A549 (cell line): ENCODE measurements at regions of chr14 and their contacts with region 1.

Region 1: GRCh38 chr14:77862154-77862786 is 62.4 kb downstream of the ADCK1 start:
- DNase-seq: peak; percentile 66 to 79
- ATAC-seq: peak; percentile 68 to 94; a peak in 5 of 6 replicates
- H3K4me3 ChIP-seq: no peak overlapping the region
- H3K27ac ChIP-seq: no peak overlapping the region
- H3K4me1 ChIP-seq: no peaks in the 10 kb centered on the region
- CTCF ChIP-seq: peak; percentile 82
- EP300 ChIP-seq: no peak
- POLR2A ChIP-seq: no peak
- RAD21 ChIP-seq: peak; percentile 82 to 83

Region 2: GRCh38 chr14:77822304-77822703 is 40.0 kb before region 1 on chr14:
- CTCF ChIA-PET with region 1: no interaction called
- POLR2A ChIA-PET with region 1: no interaction called
- DNase-seq: no peak
- ATAC-seq: peak; percentile 30 to 39; a peak in 1 of 6 replicates
- H3K4me3 ChIP-seq: no peak overlapping the region
- H3K27ac ChIP-seq: no peak overlapping the region
- H3K4me1 ChIP-seq: no peaks in the 10 kb centered on the region
- CTCF ChIP-seq: no peak
- EP300 ChIP-seq: no peak
- POLR2A ChIP-seq: no peak
- RAD21 ChIP-seq: no peak

Region 3: GRCh38 chr14:77849711-77850110 is 12.6 kb before region 1 on chr14:
- CTCF ChIA-PET with region 1: interaction called, 19 read pairs
- POLR2A ChIA-PET with region 1: no interaction called
- DNase-seq: no peak
- ATAC-seq: no peak
- H3K4me3 ChIP-seq: no peak overlapping the region
- H3K27ac ChIP-seq: no peak overlapping the region
- H3K4me1 ChIP-seq: no peaks in the 10 kb centered on the region
- CTCF ChIP-seq: no peak
- EP300 ChIP-seq: no peak
- POLR2A ChIP-seq: no peak
- RAD21 ChIP-seq: no peak

Region 4: DNA sequence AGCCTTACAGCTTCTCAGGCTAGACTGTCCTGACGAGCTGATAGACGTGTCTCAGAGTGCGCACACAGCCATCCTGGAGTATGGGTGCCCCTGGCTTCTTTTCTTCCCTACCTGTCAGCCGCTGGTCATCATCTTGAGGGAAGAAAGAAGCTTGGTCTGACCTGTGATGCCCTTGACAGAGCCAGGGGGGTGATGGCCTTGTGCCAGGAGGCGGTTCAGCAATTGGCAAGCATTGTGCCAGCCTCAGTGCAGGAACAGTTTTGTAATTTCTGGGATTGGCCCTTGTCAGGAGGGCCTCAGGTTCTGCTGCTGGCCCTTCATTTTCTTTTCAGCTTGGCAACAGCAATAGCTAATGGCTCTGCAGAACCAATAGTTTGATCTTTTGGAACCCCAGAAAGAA is 17.8 kb after region 1 on chr14:
- CTCF ChIA-PET with region 1: interaction called, 27 read pairs
- POLR2A ChIA-PET with region 1: no interaction called
- DNase-seq: no peak
- ATAC-seq: no peak
- H3K4me3 ChIP-seq: no peak overlapping the region
- H3K27ac ChIP-seq: no peak overlapping the region
- H3K4me1 ChIP-seq: no peaks in the 10 kb centered on the region
- CTCF ChIP-seq: no peak
- EP300 ChIP-seq: no peak
- POLR2A ChIP-seq: no peak
- RAD21 ChIP-seq: no peak

Region 5: DNA sequence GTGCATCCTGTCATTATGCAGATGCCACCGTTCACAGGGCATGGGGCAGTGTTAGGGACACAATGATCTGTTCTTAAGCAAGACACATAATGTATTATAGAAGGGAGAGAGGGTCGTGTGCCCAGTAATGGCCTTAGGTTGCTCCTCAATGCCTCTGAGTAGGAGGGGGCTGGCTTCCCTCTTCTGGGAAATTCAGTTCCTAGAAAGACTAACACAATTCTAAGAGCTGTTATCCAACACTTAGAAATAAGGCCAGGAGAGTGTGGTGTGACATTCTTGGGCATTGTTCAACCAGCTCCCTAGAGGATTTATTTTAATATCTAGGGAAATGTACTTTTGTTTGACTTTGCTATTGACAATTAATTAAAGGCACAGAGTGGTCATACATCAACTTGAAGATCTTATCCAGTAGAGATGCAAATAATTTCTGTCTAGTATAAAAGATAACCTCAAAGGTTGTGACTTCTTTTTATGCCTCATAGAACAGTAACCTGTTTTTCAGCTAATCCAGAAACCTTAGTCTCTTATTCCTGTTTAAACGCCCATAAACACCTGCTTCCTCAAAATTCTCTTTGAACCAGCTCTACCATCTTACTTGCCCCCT is 56.3 kb after region 1 on chr14:
- CTCF ChIA-PET with region 1: no interaction called
- POLR2A ChIA-PET with region 1: no interaction called
- DNase-seq: no peak
- ATAC-seq: no peak
- H3K4me3 ChIP-seq: no peak overlapping the region
- H3K27ac ChIP-seq: no peak overlapping the region
- H3K4me1 ChIP-seq: no peaks in the 10 kb centered on the region
- CTCF ChIP-seq: no peak
- EP300 ChIP-seq: no peak
- POLR2A ChIP-seq: no peak
- RAD21 ChIP-seq: no peak

Region 6: GRCh38 chr14:78566026-78566858 is 704.0 kb after region 1 on chr14:
- CTCF ChIA-PET with region 1: interaction called, 25 read pairs
- POLR2A ChIA-PET with region 1: no interaction called
- DNase-seq: peak; percentile 37 to 62
- ATAC-seq: peak; percentile 98 to 100
- H3K4me3 ChIP-seq: no peak overlapping the region
- H3K27ac ChIP-seq: no peak overlapping the region
- H3K4me1 ChIP-seq: no peaks in the 10 kb centered on the region
- CTCF ChIP-seq: peak; percentile 64
- EP300 ChIP-seq: no peak
- POLR2A ChIP-seq: no peak
- RAD21 ChIP-seq: peak; percentile 71 to 83